Transverse colon (tissue), 4 donors: ENCODE measurements at regions of chr4 and their contacts with region 1.

Region 1: GRCh38 chr4:7710576-7711306 is 228.9 kb downstream of the AFAP1 start:
- DNase-seq: no peak
- H3K4me3 ChIP-seq: no peak overlapping the region
- H3K27ac ChIP-seq: no peak overlapping the region
- H3K4me1 ChIP-seq: no peaks in the 10 kb centered on the region
- H3K27me3 ChIP-seq: no peaks in the 10 kb centered on the region
- CTCF ChIP-seq: no peak
- EP300 ChIP-seq: no peak
- POLR2A ChIP-seq: no peak

Region 2: DNA sequence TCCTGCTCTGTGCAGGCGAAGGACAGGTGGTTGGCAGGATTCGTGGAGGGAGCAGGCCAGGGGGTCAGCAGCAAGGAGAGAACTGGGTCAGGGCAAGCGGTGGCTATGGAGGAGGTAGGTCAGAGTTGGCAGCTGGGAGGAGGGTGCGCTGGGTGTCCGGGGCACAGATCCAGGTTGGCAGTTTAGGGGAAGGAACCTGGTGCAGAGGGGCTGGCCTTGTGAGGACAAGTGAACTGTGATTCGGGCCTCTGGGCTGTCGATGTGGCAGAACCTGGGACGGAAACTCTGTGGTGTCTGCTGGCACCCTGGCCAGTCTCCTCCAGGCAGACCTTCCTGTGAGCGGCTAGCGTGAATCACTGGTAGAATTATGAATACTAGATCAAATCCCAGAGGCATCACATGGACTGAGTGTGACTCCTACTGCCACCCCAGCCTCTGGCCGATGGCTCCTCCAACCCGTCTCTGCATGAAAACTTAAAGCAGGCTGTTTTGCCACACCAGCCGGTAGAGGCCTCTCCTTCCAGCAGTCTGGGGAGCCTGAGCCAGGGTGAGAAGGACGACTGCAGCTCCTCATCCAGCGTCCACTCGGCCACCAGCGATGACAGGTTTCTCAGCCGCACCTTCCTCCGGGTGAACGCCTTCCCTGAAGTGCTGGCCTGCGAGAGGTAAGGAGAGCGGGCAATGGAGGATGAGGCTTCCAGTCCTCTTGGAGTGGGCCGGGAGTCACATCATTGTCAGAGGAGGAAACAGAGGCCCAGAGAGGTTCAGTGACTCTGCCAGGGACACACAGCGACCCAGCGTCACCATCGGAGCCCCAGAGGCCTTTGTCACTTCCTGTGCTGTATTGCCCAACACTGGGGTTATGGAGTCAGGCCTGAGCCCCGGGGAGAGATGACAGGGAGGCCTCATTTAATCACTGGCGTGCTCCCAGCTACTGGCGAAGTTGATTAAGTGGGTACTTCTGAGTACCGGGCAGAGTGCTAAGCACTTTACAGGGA is 1979.4 kb before region 1 on chr4:
- in situ Hi-C with region 1: no loop called
- intact Hi-C with region 1: no loop called
- DNase-seq: no peak
- H3K4me3 ChIP-seq: no peak overlapping the region
- H3K27ac ChIP-seq: no peak overlapping the region
- H3K4me1 ChIP-seq: no peaks in the 10 kb centered on the region
- H3K27me3 ChIP-seq: no peaks in the 10 kb centered on the region
- CTCF ChIP-seq: no peak
- EP300 ChIP-seq: no peak
- POLR2A ChIP-seq: no peak

Region 3: GRCh38 chr4:7134737-7135388 is 575.9 kb before region 1 on chr4:
- in situ Hi-C with region 1: no loop called
- intact Hi-C with region 1: loop called (anchors 5 kb)
- DNase-seq: peak; percentile 32
- H3K4me3 ChIP-seq: no peak overlapping the region
- H3K27ac ChIP-seq: peak overlapping the region in 1 of 4 donors; percentile 8
- H3K4me1 ChIP-seq: peaks cover 0 to 4% (median 0%) of the 10 kb centered on the region in 4 donors
- H3K27me3 ChIP-seq: no peaks in the 10 kb centered on the region
- CTCF ChIP-seq: no peak
- EP300 ChIP-seq: no peak
- POLR2A ChIP-seq: no peak